Activated B cell treated with CpG ODN at 0.5 μM for 24 hours (primary cell): ENCODE measurements at regions of chr3 and their contacts with region 1.

Region 1: GRCh38 chr3:66998113-66998903 is at the start of gene KBTBD8:
- DNase-seq: peak; percentile 88
- ATAC-seq: peak; percentile 88
- H3K4me3 Mint-ChIP-seq: peak within 1 kb of the TSS; percentile 88
- H3K27ac Mint-ChIP-seq: peak within 1 kb of the TSS; percentile 93
- H3K4me1 Mint-ChIP-seq: peaks cover 47% of the 10 kb centered on the region
- H3K27me3 Mint-ChIP-seq: peaks cover 3% of the 10 kb centered on the region
- CTCF ChIP-seq: no peak
- total RNA-seq, gene KBTBD8: 45.4 and 53.3 TPM in 2 replicates

Region 2: GRCh38 chr3:66386925-66387650 is 611.2 kb before region 1 on chr3:
- CTCF ChIA-PET with region 1: no interaction called
- POLR2A ChIA-PET with region 1: no interaction called
- intact Hi-C with region 1: loop called (anchors 2 kb)
- DNase-seq: no peak
- ATAC-seq: peak; percentile 76
- H3K4me3 Mint-ChIP-seq: peak overlapping the region; percentile 69
- H3K27ac Mint-ChIP-seq: peak overlapping the region; percentile 89
- H3K4me1 Mint-ChIP-seq: peaks cover 63% of the 10 kb centered on the region
- H3K27me3 Mint-ChIP-seq: no peaks in the 10 kb centered on the region
- CTCF ChIP-seq: no peak

Region 3: DNA sequence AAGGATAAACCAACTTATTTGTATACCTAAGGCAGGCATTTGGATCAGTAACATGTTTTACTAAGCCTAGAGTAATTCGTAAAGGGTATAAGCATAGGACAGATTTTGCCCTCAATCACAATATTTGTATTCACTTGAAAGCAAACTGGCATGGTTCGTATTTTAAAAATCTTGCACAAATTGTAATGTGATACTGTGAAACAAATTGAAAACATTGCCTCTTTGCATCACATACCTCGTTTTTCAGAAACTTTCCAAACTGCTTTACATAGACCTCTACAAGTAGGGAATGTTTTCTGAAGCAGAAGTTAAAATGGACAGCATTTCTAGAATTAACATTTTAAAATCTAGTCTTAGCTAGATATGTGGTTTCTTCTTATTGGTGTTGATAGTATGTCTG is 11.4 kb after region 1 on chr3:
- CTCF ChIA-PET with region 1: no interaction called
- POLR2A ChIA-PET with region 1: interaction called, 7 read pairs
- intact Hi-C with region 1: loop called (anchors 1 kb)
- DNase-seq: no peak
- ATAC-seq: no peak
- H3K4me3 Mint-ChIP-seq: no peak overlapping the region
- H3K27ac Mint-ChIP-seq: no peak overlapping the region
- H3K4me1 Mint-ChIP-seq: peaks cover 78% of the 10 kb centered on the region
- H3K27me3 Mint-ChIP-seq: no peaks in the 10 kb centered on the region
- CTCF ChIP-seq: no peak

Region 4: GRCh38 chr3:67654099-67654843 is 656.0 kb after region 1 on chr3 and contains the start of gene SUCLG2:
- CTCF ChIA-PET with region 1: no interaction called
- POLR2A ChIA-PET with region 1: interaction called, 12 read pairs
- intact Hi-C with region 1: loop called (anchors 1 kb)
- DNase-seq: peak; percentile 80
- ATAC-seq: peak; percentile 83
- H3K4me3 Mint-ChIP-seq: peak within 1 kb of the TSS; percentile 86
- H3K27ac Mint-ChIP-seq: peak within 1 kb of the TSS; percentile 87
- H3K4me1 Mint-ChIP-seq: peaks cover 63% of the 10 kb centered on the region
- H3K27me3 Mint-ChIP-seq: no peaks in the 10 kb centered on the region
- CTCF ChIP-seq: no peak
- total RNA-seq, gene SUCLG2: 38.9 and 40.8 TPM in 2 replicates